Tibial artery (tissue), 4 donors: ENCODE measurements at regions of chr15 and their contacts with region 1.

Region 1: DNA sequence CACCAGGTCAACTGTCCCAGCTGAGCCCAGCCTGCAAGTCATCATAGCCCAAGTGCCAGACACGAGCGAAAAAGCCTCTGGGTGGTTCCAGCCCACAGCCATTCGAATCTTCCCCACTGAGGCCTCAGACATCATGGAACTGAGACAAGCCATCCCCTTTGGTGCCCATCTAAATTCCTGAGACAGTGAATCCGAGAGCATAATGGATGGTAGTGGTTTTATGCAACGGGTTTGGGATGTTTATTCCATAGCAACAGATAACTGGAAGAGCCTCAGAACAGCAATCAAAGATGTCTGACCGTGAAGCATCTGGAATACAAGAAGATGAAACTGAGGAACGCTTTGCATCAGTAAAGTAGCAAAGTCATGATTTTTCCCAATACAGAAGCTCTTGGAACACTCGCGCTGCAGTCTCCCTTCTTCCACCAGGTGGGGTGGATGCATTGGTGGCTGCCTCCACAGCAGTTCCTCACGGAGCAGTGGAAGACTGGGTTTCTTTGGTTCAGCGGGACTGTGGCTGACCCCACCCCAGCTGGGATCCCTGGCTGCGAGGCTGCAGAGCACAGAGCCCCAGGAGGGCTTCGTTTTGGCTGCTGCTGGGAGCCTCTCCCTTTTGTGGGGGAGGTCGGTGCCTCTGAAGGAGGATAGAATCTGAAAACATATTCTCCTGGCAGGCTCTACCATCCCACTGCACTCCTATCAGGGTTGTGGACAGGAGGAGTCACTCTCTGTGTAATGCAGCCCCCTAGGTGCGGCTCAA is 26.4 kb upstream of the PDE8A start:
- DNase-seq: peak; percentile 77 to 87
- H3K4me3 ChIP-seq: peak overlapping the region; percentile 26 to 30
- H3K27ac ChIP-seq: no peak overlapping the region
- H3K4me1 ChIP-seq: peaks cover 0 to 16% (median 10%) of the 10 kb centered on the region in 4 donors
- H3K27me3 ChIP-seq: no peaks in the 10 kb centered on the region
- CTCF ChIP-seq: peak; percentile 86 to 87

Region 2: DNA sequence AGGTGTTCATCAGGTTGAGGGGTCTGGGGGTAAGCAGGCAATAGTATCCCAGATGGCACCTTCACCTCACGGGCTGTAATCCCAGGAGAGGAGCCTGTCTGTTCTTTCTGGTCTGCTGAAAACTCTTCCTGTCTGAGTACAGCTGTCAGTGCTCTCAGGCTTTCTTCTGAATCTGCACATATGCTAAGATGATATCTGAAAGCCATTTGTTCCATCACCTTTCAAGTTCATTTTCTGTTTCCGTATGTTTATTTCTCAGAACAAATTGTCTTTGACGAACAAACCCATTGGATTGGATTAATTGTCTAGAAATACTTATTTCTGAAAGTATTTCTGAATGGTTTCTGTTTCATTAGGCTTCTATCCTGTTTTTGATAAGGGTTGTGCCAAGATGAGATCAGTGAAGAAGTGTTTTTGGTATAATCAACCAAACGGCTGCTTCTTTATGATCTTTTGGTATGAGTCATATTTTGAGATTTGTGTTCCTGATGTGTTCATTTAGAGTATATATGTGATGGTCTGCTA is 193.6 kb before region 1 on chr15:
- intact Hi-C with region 1: no loop called
- DNase-seq: no peak
- H3K4me3 ChIP-seq: no peak overlapping the region
- H3K27ac ChIP-seq: no peak overlapping the region
- H3K4me1 ChIP-seq: peaks cover 0 to 76% (median 42%) of the 10 kb centered on the region in 4 donors
- H3K27me3 ChIP-seq: no peaks in the 10 kb centered on the region
- CTCF ChIP-seq: no peak

Region 3: GRCh38 chr15:85041230-85041629 is 86.0 kb after region 1 on chr15:
- intact Hi-C with region 1: loop called (anchors 2 kb)
- DNase-seq: no peak
- H3K4me3 ChIP-seq: no peak overlapping the region
- H3K27ac ChIP-seq: no peak overlapping the region
- H3K4me1 ChIP-seq: peaks cover 0 to 7% (median 3%) of the 10 kb centered on the region in 4 donors
- H3K27me3 ChIP-seq: no peaks in the 10 kb centered on the region
- CTCF ChIP-seq: no peak